IMR-90 (cell line): ENCODE measurements at regions of chr13 and their contacts with region 1.

Region 1: DNA sequence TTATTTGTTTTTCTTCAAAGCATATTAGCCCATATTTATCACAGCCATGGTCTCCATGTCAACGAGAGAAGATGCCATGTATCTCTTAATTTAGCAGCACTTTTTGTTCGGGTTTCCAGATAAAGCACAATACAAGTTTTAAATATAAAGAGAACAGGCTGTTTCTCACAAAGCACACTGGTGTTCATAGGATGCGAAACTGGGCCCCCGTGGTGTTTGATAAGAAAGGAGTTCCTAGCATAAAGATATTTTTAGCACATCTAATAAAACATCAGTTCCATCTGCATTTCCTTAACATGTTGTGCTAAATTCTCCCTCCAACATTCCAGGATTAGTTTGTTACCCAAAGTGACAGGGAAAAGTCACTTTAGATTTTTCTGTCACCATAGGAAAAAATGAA is 72.4 kb upstream of the EDNRB start:
- DNase-seq: no peak
- ATAC-seq: no peak
- H3K4me3 ChIP-seq: no peak overlapping the region
- H3K27ac ChIP-seq: no peak overlapping the region
- H3K4me1 ChIP-seq: no peaks in the 10 kb centered on the region
- H3K27me3 ChIP-seq: no peaks in the 10 kb centered on the region
- CTCF ChIP-seq: no peak
- POLR2A ChIP-seq: no peak
- RAD21 ChIP-seq: no peak

Region 2: GRCh38 chr13:77930430-77930829 is 60.6 kb before region 1 on chr13:
- CTCF ChIA-PET with region 1: no interaction called
- POLR2A ChIA-PET with region 1: no interaction called
- dilution Hi-C with region 1: no loop called
- in situ Hi-C with region 1: no loop called
- intact Hi-C with region 1: loop called (anchors 10 kb)
- DNase-seq: no peak
- ATAC-seq: no peak
- H3K4me3 ChIP-seq: no peak overlapping the region
- H3K27ac ChIP-seq: no peak overlapping the region
- H3K4me1 ChIP-seq: no peaks in the 10 kb centered on the region
- H3K27me3 ChIP-seq: no peaks in the 10 kb centered on the region
- CTCF ChIP-seq: no peak
- POLR2A ChIP-seq: no peak
- RAD21 ChIP-seq: no peak

Region 3: GRCh38 chr13:78286748-78287147 is 295.7 kb after region 1 on chr13:
- CTCF ChIA-PET with region 1: no interaction called
- POLR2A ChIA-PET with region 1: no interaction called
- dilution Hi-C with region 1: no loop called
- in situ Hi-C with region 1: no loop called
- intact Hi-C with region 1: no loop called
- DNase-seq: no peak
- ATAC-seq: no peak
- H3K4me3 ChIP-seq: no peak overlapping the region
- H3K27ac ChIP-seq: no peak overlapping the region
- H3K4me1 ChIP-seq: no peaks in the 10 kb centered on the region
- H3K27me3 ChIP-seq: no peaks in the 10 kb centered on the region
- CTCF ChIP-seq: no peak
- POLR2A ChIP-seq: no peak
- RAD21 ChIP-seq: no peak